Ascending aorta (tissue), 2 donors: ENCODE measurements at regions of chr9 and their contacts with region 1.

Region 1: DNA sequence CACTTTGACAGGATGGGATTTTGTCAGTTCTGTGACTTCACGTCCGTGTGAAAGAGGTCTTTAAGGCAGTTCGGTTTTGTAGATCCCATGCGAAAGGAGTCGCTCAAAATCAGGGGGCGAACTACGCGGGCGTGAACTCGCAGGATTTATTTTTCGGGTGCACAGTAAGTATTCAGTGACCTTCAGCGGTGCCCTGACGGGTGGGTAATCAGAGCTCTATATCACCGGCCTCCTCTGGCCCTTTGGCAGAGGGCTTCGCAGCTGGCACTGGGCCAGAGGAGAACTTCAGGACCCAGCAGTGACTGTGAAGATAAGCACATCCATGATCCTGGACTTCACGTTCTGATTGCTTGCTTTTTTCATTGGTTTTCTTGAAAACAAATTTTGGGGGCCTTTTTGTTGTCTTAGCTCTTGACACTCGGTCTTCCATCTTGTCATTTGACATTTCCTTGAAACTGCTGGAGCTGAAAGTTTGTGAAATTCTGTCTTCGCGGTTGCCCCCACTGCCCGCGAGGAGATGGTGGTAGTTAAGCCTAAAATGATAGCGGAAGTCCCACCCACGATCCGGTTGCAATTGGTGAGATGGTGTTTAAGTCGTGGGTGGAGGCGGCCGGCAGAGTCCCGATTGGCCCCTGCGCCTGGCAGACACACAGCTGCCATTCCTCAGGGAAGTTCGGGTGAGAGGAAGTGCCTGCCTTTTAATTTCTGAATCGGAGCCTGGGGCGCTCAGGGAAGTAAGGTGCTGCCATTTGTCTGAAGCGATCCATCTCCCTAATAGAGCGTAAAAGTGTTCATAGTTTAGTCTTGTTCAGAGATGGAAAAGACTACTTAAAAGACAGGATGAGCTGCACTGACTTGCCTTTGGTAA is at the start of gene FAM120AOS:
- DNase-seq: peak; percentile 78 to 96
- H3K4me3 ChIP-seq: peak within 1 kb of the TSS; percentile 63 to 68
- H3K27ac ChIP-seq: peak within 1 kb of the TSS; percentile 89 to 94
- H3K4me1 ChIP-seq: peaks cover 8 to 25% of the 10 kb centered on the region in 2 donors
- H3K27me3 ChIP-seq: no peaks in the 10 kb centered on the region
- CTCF ChIP-seq: no peak
- total RNA-seq, gene FAM120AOS: 19.9 TPM

Region 2: GRCh38 chr9:92115071-92115858 is 1338.0 kb before region 1 on chr9 and contains the start of gene SPTLC1:
- intact Hi-C with region 1: loop called (anchors 10 kb)
- DNase-seq: peak; percentile 79 to 96
- H3K4me3 ChIP-seq: peak within 1 kb of the TSS; percentile 83 to 88
- H3K27ac ChIP-seq: peak within 1 kb of the TSS; percentile 82 to 88
- H3K4me1 ChIP-seq: peaks cover 3 to 6% of the 10 kb centered on the region in 2 donors
- H3K27me3 ChIP-seq: no peaks in the 10 kb centered on the region
- CTCF ChIP-seq: no peak
- total RNA-seq, gene SPTLC1: 48.0 TPM

Region 3: DNA sequence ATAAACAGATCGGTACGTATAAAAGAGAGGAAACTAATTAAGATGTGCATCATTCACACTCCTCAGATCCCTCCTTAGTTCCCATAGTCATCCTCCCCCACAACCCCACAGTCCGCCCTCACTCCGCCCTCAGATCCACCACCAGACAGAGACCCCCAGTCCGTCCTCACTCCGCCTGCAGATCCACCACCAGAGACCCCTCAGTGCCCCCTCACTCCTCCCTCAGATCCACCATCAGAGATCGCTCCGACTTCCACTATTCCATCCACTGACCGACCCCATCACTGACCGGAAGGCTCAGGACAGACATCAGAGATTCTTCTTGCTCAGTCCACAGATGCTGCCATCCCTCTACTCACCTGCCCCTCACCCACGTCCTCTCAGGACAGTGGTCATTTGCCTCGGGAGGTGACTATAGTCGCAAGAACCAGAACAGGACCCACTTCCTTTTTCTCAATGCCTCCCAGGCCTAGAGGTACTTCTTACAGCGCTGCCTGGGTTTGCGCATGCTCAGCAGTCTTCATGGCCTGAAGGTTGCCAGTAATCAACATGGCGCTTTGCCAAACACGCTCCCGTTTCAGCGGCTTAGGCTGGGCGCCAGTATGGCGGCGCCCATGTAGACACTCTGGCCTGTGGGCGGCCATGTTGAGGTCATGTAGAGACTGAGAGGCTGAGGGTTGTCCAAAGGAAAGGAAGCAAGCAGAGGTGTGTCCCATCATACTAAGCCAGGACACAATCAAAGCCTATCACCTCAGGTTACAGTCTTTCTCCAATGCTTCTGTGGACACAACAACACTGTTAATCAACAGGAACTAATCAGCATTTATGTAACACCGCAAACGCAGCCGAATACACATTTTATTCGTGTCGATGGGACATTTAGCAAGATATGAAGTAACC is 575.5 kb before region 1 on chr9 and contains the start of gene ZNF484:
- intact Hi-C with region 1: loop called (anchors 5 kb)
- DNase-seq: peak; percentile 88 to 99
- H3K4me3 ChIP-seq: peak within 1 kb of the TSS; percentile 80 to 82
- H3K27ac ChIP-seq: peak within 1 kb of the TSS; percentile 74 to 85
- H3K4me1 ChIP-seq: peaks cover 0 to 6% of the 10 kb centered on the region in 2 donors
- H3K27me3 ChIP-seq: no peaks in the 10 kb centered on the region
- CTCF ChIP-seq: no peak
- total RNA-seq, gene ZNF484: 16.9 TPM

Region 4: GRCh38 chr9:93095205-93096130 is 357.8 kb before region 1 on chr9:
- intact Hi-C with region 1: loop called (anchors 5 kb)
- DNase-seq: peak; percentile 98 to 100
- H3K4me3 ChIP-seq: peak overlapping the region; percentile 56 to 81
- H3K27ac ChIP-seq: peak overlapping the region; percentile 88 to 97
- H3K4me1 ChIP-seq: peaks cover 22 to 37% of the 10 kb centered on the region in 2 donors
- H3K27me3 ChIP-seq: no peaks in the 10 kb centered on the region
- CTCF ChIP-seq: peak in 1 of 3 experiments; percentile 4

Region 5: DNA sequence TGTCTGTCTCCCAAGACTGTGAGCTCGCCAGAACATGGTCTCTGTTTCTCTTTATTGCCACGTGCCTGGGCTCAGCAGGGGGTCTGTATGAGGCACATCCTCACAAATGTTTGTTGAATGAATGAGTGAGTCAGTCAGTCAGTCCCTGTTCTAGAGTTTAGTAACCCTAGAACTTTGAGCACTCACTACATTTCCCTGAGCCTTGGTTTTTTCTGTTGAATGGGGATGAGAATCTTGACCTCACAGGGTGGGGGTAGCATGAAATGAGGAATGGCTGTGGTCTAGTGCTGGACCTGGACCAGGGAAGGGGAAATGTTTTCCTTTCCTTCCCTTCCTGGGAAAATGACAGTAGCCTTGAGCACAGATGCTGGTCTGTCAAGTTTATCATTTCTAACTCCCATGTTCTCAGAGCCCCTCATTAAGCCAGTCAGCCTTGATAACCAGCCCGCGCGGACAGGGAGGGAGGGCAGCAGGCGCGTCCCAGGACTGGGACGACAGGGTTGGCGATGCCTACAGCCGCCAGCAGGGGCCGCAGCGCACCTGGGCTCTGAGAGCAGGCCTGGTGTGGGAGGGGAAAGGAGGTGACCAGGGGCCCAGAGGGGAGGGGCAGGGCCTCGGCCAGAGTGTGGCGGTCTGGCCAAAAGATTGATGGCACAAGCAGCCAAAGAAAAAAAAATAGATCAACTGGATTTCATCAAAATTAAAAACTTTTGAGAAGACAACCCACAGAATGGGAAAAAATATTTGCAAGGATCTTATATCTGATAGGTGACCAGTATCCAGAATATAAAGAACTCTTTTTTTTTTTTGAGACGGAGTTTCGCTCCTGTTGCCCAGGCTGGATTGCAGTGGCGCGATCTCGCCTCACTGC is 293.4 kb before region 1 on chr9:
- intact Hi-C with region 1: loop called (anchors 10 kb)
- DNase-seq: peak in 1 of 2 donors; percentile 90
- H3K4me3 ChIP-seq: peak overlapping the region in 1 of 2 donors; percentile 29
- H3K27ac ChIP-seq: no peak overlapping the region
- H3K4me1 ChIP-seq: peaks cover 0 to 4% of the 10 kb centered on the region in 2 donors
- H3K27me3 ChIP-seq: no peaks in the 10 kb centered on the region
- CTCF ChIP-seq: peak; percentile 90 to 99 (median 98)

Region 6: DNA sequence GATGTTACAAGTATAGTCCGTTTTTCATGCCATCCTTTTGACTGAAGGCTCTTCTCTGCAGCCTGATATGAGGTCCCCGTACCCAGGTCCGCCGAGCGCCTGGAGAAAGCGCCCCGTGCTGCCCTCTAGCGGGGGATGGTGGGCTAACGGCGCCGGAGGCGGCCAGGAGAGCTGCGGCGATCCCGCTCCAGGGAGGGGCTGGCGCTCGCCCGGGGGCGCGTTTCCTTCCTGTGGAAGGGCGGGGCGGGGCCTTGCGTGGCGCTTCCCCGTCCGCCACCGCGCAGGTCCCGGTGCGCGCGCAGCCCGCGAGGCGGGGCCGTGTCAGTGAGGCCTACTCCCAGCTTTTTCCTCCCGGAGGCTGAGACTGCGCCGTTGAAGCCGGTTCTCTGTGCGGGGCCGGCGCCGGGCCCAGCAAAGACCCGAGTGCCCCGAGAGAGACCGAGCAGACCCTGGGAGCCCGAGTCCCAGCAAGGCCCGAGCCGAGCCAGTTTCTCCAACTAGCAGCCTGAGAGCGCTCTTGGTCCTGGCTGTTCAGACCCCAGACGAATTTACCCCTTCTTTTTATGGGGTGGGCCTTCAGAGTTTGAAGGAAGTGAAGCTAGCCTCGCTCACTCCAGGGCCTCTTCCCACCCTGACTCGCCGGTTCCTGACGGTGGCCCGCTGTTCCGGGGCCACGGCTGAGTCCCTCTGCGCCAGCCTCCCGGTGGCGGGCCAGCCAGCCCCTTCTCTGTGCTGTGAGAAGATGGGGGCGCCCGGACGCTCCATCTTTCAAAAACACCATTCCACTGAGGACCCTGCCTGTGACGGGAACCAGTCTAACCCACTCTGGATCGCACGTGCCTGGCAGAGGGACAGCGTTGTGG is 113.4 kb after region 1 on chr9:
- intact Hi-C with region 1: loop called (anchors 2 kb)
- DNase-seq: peak; percentile 86 to 99
- H3K4me3 ChIP-seq: peak overlapping the region; percentile 69 to 91
- H3K27ac ChIP-seq: peak overlapping the region; percentile 93 to 99
- H3K4me1 ChIP-seq: peaks cover 6 to 10% of the 10 kb centered on the region in 2 donors
- H3K27me3 ChIP-seq: no peaks in the 10 kb centered on the region
- CTCF ChIP-seq: peak; percentile 92 to 98 (median 96)